Activated CD4-positive, alpha-beta T cell treated with anti-CD3 and anti-CD28 coated beads for 36 hours (primary cell): ENCODE measurements at regions of chr2 and their contacts with region 1.

Region 1: DNA sequence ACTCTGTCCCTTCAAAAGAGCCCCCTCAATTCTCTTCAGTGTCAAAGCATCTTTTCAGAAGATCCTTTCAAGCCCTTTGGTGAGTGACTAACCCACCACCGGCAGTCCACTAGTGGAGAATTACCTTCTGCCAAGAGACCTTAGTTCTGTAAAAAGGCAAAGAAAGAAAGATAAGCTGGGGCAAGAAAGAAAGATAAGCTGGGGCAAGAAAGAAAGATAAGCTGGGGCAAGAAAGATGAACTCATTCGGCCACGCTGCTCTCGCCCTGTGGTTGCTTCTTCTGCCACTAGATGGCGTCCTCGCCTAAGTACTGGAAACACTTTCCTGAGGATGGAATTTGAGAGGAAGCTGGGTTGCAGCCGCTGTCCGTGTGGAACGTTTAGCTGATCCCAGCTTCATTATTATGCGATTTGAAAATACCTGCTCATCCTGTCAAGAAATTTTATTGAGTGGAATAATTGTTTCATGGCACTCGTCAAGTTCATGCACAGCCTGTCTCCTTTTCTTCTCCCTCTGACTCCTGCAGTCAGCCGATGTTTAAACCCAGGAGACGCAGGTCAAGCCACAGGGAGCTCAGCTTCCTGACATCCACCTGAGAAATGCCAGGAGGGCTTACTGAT is 17.3 kb upstream of the ANXA4 start:
- DNase-seq: peak; percentile 92
- ATAC-seq: peak; percentile 92
- H3K4me3 Mint-ChIP-seq: peak overlapping the region; percentile 47
- H3K27ac Mint-ChIP-seq: peak overlapping the region; percentile 20
- H3K4me1 Mint-ChIP-seq: peaks cover 4% of the 10 kb centered on the region
- H3K27me3 Mint-ChIP-seq: no peaks in the 10 kb centered on the region

Region 2: DNA sequence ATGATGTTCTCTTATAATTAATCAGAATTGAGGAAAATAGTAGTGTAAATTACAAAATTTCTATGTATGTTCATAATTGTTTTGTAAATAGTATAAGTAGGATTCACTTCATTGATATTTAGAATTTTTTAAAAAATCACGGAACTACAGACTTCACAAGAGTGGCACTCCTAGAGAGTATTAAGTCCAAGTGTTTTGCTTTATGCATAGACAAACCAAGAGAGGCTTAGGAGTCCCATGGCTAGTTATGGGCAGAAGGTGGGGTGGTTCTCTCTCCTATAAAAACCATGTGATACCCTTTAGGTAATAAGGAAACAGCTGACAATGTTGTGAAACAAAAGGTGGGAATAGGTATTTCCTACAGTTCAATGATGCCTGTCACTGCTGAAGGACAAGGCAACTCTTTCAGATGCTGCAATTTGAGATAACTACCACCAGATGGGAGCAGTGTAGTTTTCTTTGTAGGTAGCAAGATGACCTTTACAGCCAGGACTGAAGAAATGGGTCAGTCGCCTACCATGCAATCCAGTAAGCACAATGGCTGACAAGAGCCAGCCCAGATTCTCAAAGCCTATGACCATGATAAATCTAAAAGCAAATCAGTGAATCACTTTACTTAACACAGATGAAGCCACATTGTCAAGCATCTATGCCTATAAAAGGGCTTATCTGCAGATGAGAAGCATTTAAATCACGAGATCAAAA is 165.1 kb before region 1 on chr2:
- CTCF ChIA-PET with region 1: interaction called, 17 read pairs
- POLR2A ChIA-PET with region 1: no interaction called
- intact Hi-C with region 1: no loop called
- DNase-seq: peak; percentile 27
- ATAC-seq: peak; percentile 75
- H3K4me3 Mint-ChIP-seq: no peak overlapping the region
- H3K27ac Mint-ChIP-seq: peak overlapping the region; percentile 58
- H3K4me1 Mint-ChIP-seq: peaks cover 87% of the 10 kb centered on the region
- H3K27me3 Mint-ChIP-seq: no peaks in the 10 kb centered on the region

Region 3: GRCh38 chr2:69741619-69742466 is 17.2 kb after region 1 on chr2 and contains the start of gene ANXA4:
- CTCF ChIA-PET with region 1: interaction called, 43 read pairs
- POLR2A ChIA-PET with region 1: interaction called, 3 read pairs
- intact Hi-C with region 1: no loop called
- DNase-seq: peak; percentile 73
- ATAC-seq: peak; percentile 86
- H3K4me3 Mint-ChIP-seq: peak within 1 kb of the TSS; percentile 78
- H3K27ac Mint-ChIP-seq: peak within 1 kb of the TSS; percentile 81
- H3K4me1 Mint-ChIP-seq: peaks cover 11% of the 10 kb centered on the region
- H3K27me3 Mint-ChIP-seq: no peaks in the 10 kb centered on the region
- total RNA-seq, gene ANXA4: 24.8 to 30.7 TPM

Region 4: GRCh38 chr2:69804416-69804815 is 79.8 kb after region 1 on chr2:
- CTCF ChIA-PET with region 1: interaction called, 395 read pairs
- POLR2A ChIA-PET with region 1: no interaction called
- intact Hi-C with region 1: no loop called
- DNase-seq: no peak
- ATAC-seq: no peak
- H3K4me3 Mint-ChIP-seq: no peak overlapping the region
- H3K27ac Mint-ChIP-seq: peak overlapping the region; percentile 47
- H3K4me1 Mint-ChIP-seq: peaks cover 13% of the 10 kb centered on the region
- H3K27me3 Mint-ChIP-seq: no peaks in the 10 kb centered on the region

Region 5: GRCh38 chr2:69837533-69837932 is 112.9 kb after region 1 on chr2:
- CTCF ChIA-PET with region 1: interaction called, 13 read pairs
- POLR2A ChIA-PET with region 1: no interaction called
- intact Hi-C with region 1: no loop called
- DNase-seq: no peak
- ATAC-seq: peak; percentile 65
- H3K4me3 Mint-ChIP-seq: no peak overlapping the region
- H3K27ac Mint-ChIP-seq: no peak overlapping the region
- H3K4me1 Mint-ChIP-seq: peaks cover 41% of the 10 kb centered on the region
- H3K27me3 Mint-ChIP-seq: no peaks in the 10 kb centered on the region

Region 6: GRCh38 chr2:69914170-69914960 is 189.7 kb after region 1 on chr2:
- CTCF ChIA-PET with region 1: interaction called, 18 read pairs
- POLR2A ChIA-PET with region 1: no interaction called
- intact Hi-C with region 1: loop called in 1 of 2 experiments (anchors 5 kb)
- DNase-seq: peak; percentile 100
- ATAC-seq: peak; percentile 96
- H3K4me3 Mint-ChIP-seq: peak overlapping the region; percentile 81
- H3K27ac Mint-ChIP-seq: peak overlapping the region; percentile 89
- H3K4me1 Mint-ChIP-seq: peaks cover 35% of the 10 kb centered on the region
- H3K27me3 Mint-ChIP-seq: no peaks in the 10 kb centered on the region